ENCODE measurements at regions of chrX and their contacts with region 1.

Region 1: DNA sequence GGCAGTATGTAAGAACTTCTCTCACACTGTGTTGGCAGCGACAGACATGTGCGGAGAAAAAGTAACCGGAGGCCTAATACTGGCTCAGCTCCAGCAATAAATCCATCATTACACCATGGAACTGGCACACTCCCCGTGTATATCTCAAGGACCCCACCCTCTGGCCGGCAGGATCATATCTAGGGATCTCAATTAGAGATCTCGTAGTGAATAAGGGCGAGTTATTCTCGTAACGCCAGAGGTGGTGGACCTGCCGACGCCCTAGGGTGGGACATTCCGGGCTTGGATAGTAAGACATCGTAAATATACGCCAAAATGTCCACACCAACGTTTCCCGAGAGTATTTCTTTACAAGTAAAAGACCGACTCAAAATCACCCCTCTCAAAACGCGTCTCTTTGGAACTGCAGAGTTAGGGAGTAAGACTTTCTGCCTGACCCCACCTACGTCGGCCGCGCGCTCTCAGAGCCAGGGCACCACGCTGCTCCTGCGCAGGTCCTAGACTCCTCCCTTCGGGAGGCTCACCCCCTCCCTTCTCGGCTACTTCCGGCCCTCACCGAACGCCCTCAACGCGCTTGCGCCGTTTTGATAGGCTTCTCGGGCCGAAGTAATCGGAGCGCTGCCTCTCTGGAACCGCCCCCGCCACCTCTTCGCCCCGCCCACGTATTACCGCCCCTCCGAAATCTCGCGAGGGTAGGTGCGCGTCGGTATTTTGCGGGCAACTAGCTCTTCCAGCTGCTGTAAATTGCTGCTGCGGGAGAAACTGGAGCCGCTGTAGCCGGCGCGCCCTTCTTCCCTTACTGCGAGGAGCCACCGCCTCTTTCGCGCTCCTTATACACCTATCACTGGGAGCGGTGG is at the start of gene WDR44:
- DNase-seq: peak; percentile 92 to 97
- ATAC-seq: peak; percentile 95 to 98 (median 96)
- H3K4me3 ChIP-seq: peak within 1 kb of the TSS; percentile 74
- H3K27ac ChIP-seq: peak within 1 kb of the TSS; percentile 88
- H3K4me1 ChIP-seq: peaks cover 5% of the 10 kb centered on the region
- H3K27me3 ChIP-seq: no peaks in the 10 kb centered on the region
- CTCF ChIP-seq: no peak
- total RNA-seq, gene WDR44: 8.1 to 13.1 (median 12.1) TPM

Region 2: GRCh38 chrX:117972711-117973109 is 372.9 kb before region 1 on chrX:
- intact Hi-C with region 1: no loop called
- DNase-seq: no peak
- ATAC-seq: no peak
- H3K4me3 ChIP-seq: no peak overlapping the region
- H3K27ac ChIP-seq: no peak overlapping the region
- H3K4me1 ChIP-seq: no peaks in the 10 kb centered on the region
- H3K27me3 ChIP-seq: no peaks in the 10 kb centered on the region
- CTCF ChIP-seq: no peak

Region 3: DNA sequence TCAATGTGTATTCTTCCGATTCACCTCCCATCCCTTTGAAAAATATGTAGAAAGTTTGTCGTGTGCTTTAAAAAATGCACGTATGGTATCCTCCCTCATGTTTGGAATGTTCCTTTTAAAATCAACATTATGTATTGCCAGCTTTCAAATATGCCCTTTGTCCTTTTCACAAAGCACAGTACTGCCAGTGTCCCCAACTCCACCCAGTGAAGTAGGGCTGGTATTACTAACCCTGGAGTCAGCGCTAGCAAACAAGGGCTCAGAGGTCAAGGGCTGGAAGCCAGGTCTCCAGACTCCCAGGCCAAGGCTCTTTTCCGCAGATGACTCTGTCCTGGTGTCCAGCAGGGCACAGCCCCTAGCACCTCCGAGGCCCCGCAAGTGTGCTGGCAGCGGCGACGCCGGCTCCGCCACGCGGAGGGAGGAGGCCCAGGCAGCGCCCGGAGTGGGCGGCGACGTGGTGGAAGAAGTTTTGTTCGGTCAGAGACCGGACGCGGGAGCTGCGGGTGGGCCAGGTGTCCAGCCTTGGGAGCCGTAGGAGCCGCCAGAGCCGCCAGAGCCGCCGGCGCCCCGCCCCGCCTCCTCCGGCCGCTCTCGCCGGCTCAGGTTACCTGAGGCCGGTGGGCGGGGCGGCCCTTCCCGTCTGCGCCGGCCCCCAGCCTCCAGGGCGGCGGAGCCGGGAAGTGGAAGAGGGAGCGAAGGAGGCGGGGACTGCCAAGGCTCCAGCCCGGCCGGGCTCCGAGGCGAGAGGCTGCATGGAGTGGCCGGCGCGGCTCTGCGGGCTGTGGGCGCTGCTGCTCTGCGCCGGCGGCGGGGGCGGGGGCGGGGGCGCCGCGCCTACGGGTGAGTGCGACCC is 381.5 kb after region 1 on chrX and contains the start of gene IL13RA1:
- intact Hi-C with region 1: loop called in 1 of 2 experiments (anchors 5 kb)
- DNase-seq: peak; percentile 81 to 88
- ATAC-seq: peak; percentile 93 to 94 (median 94)
- H3K4me3 ChIP-seq: peak within 1 kb of the TSS; percentile 76
- H3K27ac ChIP-seq: peak within 1 kb of the TSS; percentile 89
- H3K4me1 ChIP-seq: peaks cover 15% of the 10 kb centered on the region
- H3K27me3 ChIP-seq: no peaks in the 10 kb centered on the region
- CTCF ChIP-seq: no peak
- total RNA-seq, gene IL13RA1: 32.8 to 56.1 (median 41.5) TPM

Region 4: DNA sequence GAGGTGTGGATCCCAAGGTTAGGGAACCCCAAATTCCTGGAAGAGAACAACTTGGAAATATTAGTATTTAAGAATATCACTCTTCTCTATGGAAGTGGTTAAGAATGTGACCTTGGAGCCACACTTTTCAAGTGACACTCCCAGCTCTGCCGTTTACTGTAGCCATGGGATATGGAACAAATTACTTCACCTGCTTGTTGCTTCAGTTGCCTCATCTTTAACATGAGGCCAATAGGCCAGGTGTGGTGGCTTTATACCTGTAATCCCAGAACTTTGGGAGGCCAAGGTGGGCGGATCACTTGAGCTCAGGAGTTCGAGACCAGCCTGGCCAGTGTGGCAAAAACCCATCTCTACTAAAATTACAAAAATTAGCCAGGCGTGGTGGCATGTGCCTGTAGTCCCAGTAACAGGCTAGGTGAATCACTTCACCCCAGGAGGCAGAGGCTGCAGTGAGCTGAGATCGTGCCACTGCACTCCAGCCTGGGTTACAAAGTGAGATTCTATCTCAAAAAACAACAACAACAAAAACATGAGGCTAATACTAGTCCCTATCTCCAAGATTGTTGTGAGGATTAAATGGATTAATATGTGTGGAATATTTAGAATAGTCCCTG is 394.8 kb after region 1 on chrX:
- intact Hi-C with region 1: no loop called
- DNase-seq: no peak
- ATAC-seq: no peak
- H3K4me3 ChIP-seq: no peak overlapping the region
- H3K27ac ChIP-seq: no peak overlapping the region
- H3K4me1 ChIP-seq: peaks cover 9% of the 10 kb centered on the region
- H3K27me3 ChIP-seq: no peaks in the 10 kb centered on the region
- CTCF ChIP-seq: no peak

Measured in psoas muscle (tissue), 8 donors.